ENCODE measurements at regions of chr13 and their contacts with region 1.

Region 1: GRCh38 chr13:20106742-20107141 is 54.1 kb downstream of the GJA3 start:
- DNase-seq: no peak
- H3K4me3 ChIP-seq: no peak overlapping the region
- H3K27ac ChIP-seq: no peak overlapping the region
- H3K4me1 ChIP-seq: no peaks in the 10 kb centered on the region
- H3K27me3 ChIP-seq: peaks cover 9 to 23% of the 10 kb centered on the region in 2 experiments
- CTCF ChIP-seq: no peak
- POLR2A ChIP-seq: no peak

Region 2: DNA sequence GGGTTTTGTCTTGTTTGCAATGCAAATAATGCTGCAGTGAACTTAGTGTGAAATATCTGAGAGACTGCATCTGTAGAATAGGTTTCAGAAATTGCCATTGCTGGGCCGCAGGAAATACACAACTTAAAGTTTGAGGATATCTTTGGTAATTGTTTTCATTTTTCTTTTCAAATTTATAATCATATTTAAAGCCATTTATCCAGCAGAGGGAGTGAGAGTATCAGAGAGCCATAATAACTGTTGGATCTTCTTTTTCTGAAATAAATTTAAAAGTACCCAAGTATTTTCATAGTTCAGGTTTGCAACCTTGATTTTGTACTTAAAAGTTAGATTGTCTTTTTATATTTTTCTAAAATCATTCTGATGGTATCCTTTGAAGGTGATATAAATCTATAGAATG is 48.8 kb before region 1 on chr13:
- CTCF ChIA-PET with region 1: no interaction called
- POLR2A ChIA-PET with region 1: no interaction called
- dilution Hi-C with region 1: no loop called
- intact Hi-C with region 1: loop called (anchors 1 kb)
- DNase-seq: no peak
- H3K4me3 ChIP-seq: no peak overlapping the region
- H3K27ac ChIP-seq: no peak overlapping the region
- H3K4me1 ChIP-seq: no peaks in the 10 kb centered on the region
- H3K27me3 ChIP-seq: no peaks in the 10 kb centered on the region
- CTCF ChIP-seq: no peak
- POLR2A ChIP-seq: no peak

Measured in endothelial cell of umbilical vein (primary cell).